Activated CD4-positive, alpha-beta T cell treated with anti-CD3 and anti-CD28 coated beads for 36 hours (primary cell): ENCODE measurements at regions of chr18 and their contacts with region 1.

Region 1: GRCh38 chr18:51197661-51198424 is at the start of gene MEX3C:
- DNase-seq: peak; percentile 100
- ATAC-seq: peak; percentile 86
- H3K4me3 Mint-ChIP-seq: peak within 1 kb of the TSS; percentile 95
- H3K27ac Mint-ChIP-seq: peak within 1 kb of the TSS; percentile 96
- H3K4me1 Mint-ChIP-seq: peaks cover 25% of the 10 kb centered on the region
- H3K27me3 Mint-ChIP-seq: no peaks in the 10 kb centered on the region
- total RNA-seq, gene MEX3C: 46.7 to 66.9 TPM

Region 2: GRCh38 chr18:50374753-50375391 is 823.0 kb before region 1 on chr18 and contains the start of gene SKA1:
- CTCF ChIA-PET with region 1: no interaction called
- POLR2A ChIA-PET with region 1: no interaction called
- intact Hi-C with region 1: loop called in 1 of 2 experiments (anchors 2 kb)
- DNase-seq: peak; percentile 96
- ATAC-seq: peak; percentile 99
- H3K4me3 Mint-ChIP-seq: peak within 1 kb of the TSS; percentile 83
- H3K27ac Mint-ChIP-seq: peak within 1 kb of the TSS; percentile 79
- H3K4me1 Mint-ChIP-seq: peaks cover 2% of the 10 kb centered on the region
- H3K27me3 Mint-ChIP-seq: peaks cover under 1% of the 10 kb centered on the region
- total RNA-seq, gene SKA1: 38.6 to 48.3 TPM

Region 3: DNA sequence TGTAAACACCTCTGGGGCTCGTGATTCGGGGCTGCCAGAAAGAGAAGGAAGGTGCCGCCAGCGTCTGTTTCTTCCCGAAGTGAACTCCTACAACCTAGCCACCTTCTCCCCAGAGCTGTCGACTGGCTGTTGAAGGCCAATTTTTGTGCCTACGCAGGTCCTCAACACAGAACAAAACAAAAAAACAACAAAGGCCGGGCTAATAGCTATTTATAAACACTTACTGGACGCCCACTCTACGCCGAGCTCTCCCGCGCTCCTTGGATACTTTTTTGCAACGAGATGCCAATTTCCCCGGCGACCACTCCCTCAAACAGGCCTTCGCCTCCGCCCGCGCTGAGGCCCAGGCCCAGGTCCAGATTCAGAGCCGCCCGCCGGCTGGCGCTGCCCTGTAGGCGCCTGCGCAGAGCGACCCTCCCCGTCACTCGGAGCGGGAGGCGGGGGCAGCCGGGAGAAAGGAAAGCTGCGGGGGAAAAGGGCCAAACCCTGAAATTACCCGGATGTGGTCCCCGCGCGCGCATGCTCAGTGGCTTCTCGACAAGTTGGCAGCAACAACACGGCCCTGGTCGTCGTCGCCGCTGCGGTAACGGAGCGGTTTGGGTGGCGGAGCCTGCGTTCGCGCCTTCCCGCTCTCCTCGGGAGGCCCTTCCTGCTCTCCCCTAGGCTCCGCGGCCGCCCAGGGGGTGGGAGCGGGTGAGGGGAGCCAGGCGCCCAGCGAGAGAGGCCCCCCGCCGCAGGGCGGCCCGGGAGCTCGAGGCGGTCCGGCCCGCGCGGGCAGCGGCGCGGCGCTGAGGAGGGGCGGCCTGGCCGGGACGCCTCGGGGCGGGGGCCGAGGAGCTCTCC is 167.9 kb before region 1 on chr18 and contains the start of gene SMAD4:
- CTCF ChIA-PET with region 1: interaction called, 4 read pairs
- POLR2A ChIA-PET with region 1: no interaction called
- intact Hi-C with region 1: loop called (anchors 1 to 5 kb)
- DNase-seq: peak; percentile 99
- ATAC-seq: peak; percentile 84
- H3K4me3 Mint-ChIP-seq: peak within 1 kb of the TSS; percentile 85
- H3K27ac Mint-ChIP-seq: peak within 1 kb of the TSS; percentile 94
- H3K4me1 Mint-ChIP-seq: peaks cover 55% of the 10 kb centered on the region
- H3K27me3 Mint-ChIP-seq: no peaks in the 10 kb centered on the region
- total RNA-seq, gene SMAD4: 79.3 to 89.5 TPM

Region 4: GRCh38 chr18:51110073-51110803 is 87.6 kb before region 1 on chr18:
- CTCF ChIA-PET with region 1: interaction called, 7 read pairs
- POLR2A ChIA-PET with region 1: interaction called, 3 read pairs
- intact Hi-C with region 1: loop called in 1 of 2 experiments (anchors 1 kb)
- DNase-seq: peak; percentile 85
- ATAC-seq: peak; percentile 86
- H3K4me3 Mint-ChIP-seq: no peak overlapping the region
- H3K27ac Mint-ChIP-seq: no peak overlapping the region
- H3K4me1 Mint-ChIP-seq: peaks cover 12% of the 10 kb centered on the region
- H3K27me3 Mint-ChIP-seq: no peaks in the 10 kb centered on the region

Region 5: DNA sequence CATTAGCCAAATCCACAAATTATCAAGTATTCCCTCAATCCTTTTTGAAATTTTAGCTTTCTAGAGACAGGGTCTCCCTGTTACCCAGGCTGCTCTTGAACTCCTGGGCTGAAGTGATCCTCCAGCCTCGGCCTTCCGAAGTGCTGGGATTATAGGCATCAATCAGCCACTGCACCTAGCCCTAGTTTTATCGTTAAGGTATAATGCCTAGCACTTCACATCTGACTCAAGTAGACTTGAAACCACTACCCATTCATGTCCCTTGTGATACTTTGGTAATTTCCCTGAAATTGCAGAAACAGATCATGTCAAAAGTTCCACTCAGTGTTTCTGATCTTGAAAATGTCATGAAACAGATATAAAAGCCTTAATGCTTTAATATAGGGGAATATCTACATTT is 26.6 kb before region 1 on chr18:
- CTCF ChIA-PET with region 1: interaction called, 8 read pairs
- POLR2A ChIA-PET with region 1: interaction called, 5 read pairs
- intact Hi-C with region 1: loop called (anchors 1 kb)
- DNase-seq: no peak
- ATAC-seq: peak; percentile 83
- H3K4me3 Mint-ChIP-seq: peak overlapping the region; percentile 64
- H3K27ac Mint-ChIP-seq: peak overlapping the region; percentile 92
- H3K4me1 Mint-ChIP-seq: peaks cover 62% of the 10 kb centered on the region
- H3K27me3 Mint-ChIP-seq: no peaks in the 10 kb centered on the region

Region 6: GRCh38 chr18:51235011-51235789 is 37.4 kb after region 1 on chr18:
- CTCF ChIA-PET with region 1: no interaction called
- POLR2A ChIA-PET with region 1: no interaction called
- intact Hi-C with region 1: loop called in 1 of 2 experiments (anchors 1 kb)
- DNase-seq: peak; percentile 68
- ATAC-seq: peak; percentile 99
- H3K4me3 Mint-ChIP-seq: no peak overlapping the region
- H3K27ac Mint-ChIP-seq: no peak overlapping the region
- H3K4me1 Mint-ChIP-seq: peaks cover 17% of the 10 kb centered on the region
- H3K27me3 Mint-ChIP-seq: peaks cover 6% of the 10 kb centered on the region

Region 7: GRCh38 chr18:51300912-51301311 is 103.1 kb after region 1 on chr18:
- CTCF ChIA-PET with region 1: no interaction called
- POLR2A ChIA-PET with region 1: no interaction called
- intact Hi-C with region 1: no loop called
- DNase-seq: no peak
- ATAC-seq: peak; percentile 55
- H3K4me3 Mint-ChIP-seq: no peak overlapping the region
- H3K27ac Mint-ChIP-seq: no peak overlapping the region
- H3K4me1 Mint-ChIP-seq: no peaks in the 10 kb centered on the region
- H3K27me3 Mint-ChIP-seq: peaks cover 4% of the 10 kb centered on the region